Caco-2 (cell line): ENCODE measurements at regions of chr9 and their contacts with region 1.

Region 1: DNA sequence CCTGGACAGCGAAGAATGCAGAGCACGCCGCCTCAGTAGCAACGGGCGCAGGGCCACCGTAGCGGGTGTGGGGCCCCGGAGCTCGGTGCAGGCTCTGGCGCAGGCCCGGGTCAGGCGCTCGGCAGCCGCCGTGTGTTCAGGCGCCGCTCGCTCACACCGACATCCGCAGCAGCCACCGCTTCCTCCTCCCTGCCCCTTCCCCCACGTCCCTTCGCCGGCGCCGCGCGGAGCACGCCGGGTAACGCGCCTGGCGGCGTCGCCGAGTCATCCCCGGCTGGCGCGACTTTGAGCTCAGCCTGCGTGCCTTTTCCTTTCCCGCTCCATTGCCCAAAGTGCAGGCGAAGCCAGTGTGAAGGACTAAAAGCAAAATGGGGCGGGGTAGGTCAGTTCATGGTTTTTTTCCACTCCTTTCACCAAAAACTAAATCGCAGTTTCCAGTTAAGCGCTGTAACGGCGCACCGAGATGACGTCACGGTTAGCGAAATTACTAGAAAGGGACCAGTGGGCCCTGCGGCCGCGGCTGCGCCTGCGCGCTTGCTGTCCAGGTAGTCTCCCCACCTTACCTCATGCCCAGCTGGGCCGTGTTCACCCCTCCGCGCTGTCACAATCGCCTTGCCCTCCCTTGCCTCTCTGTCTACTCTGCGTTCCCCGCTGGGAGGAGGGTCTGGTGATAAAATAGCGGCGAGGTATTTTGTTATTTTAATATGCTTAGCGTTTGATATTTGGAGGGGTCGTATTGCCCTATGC is at the start of gene UBQLN1:
- DNase-seq: peak; percentile 82 to 87
- H3K4me3 ChIP-seq: peak within 1 kb of the TSS; percentile 87
- H3K4me3 Mint-ChIP-seq: peak within 1 kb of the TSS; percentile 90
- H3K27ac Mint-ChIP-seq: peak within 1 kb of the TSS; percentile 99
- H3K4me1 ChIP-seq: 0 out of 2 replicates have a peak, but pooled peaks cover 4% of the 10 kb centered on the region
- H3K4me1 Mint-ChIP-seq: no peaks in the 10 kb centered on the region
- H3K27me3 ChIP-seq: no peaks in the 10 kb centered on the region
- H3K27me3 Mint-ChIP-seq: no peaks in the 10 kb centered on the region
- CTCF ChIP-seq: no peak
- total RNA-seq, gene UBQLN1: 56.0 and 56.3 TPM in 2 replicates

Region 2: GRCh38 chr9:83469722-83470121 is 238.2 kb before region 1 on chr9:
- CTCF ChIA-PET with region 1: no interaction called
- POLR2A ChIA-PET with region 1: no interaction called
- intact Hi-C with region 1: no loop called
- DNase-seq: no peak
- H3K4me3 ChIP-seq: no peak overlapping the region
- H3K4me3 Mint-ChIP-seq: no peak overlapping the region
- H3K27ac Mint-ChIP-seq: no peak overlapping the region
- H3K4me1 ChIP-seq: no peaks in the 10 kb centered on the region
- H3K4me1 Mint-ChIP-seq: peaks cover 12% of the 10 kb centered on the region
- H3K27me3 ChIP-seq: no peaks in the 10 kb centered on the region
- H3K27me3 Mint-ChIP-seq: peaks cover 8% of the 10 kb centered on the region
- CTCF ChIP-seq: no peak

Region 3: GRCh38 chr9:83491995-83492394 is 215.9 kb before region 1 on chr9:
- CTCF ChIA-PET with region 1: no interaction called
- POLR2A ChIA-PET with region 1: no interaction called
- intact Hi-C with region 1: no loop called
- DNase-seq: no peak
- H3K4me3 ChIP-seq: no peak overlapping the region
- H3K4me3 Mint-ChIP-seq: no peak overlapping the region
- H3K27ac Mint-ChIP-seq: no peak overlapping the region
- H3K4me1 ChIP-seq: no peaks in the 10 kb centered on the region
- H3K4me1 Mint-ChIP-seq: no peaks in the 10 kb centered on the region
- H3K27me3 ChIP-seq: no peaks in the 10 kb centered on the region
- H3K27me3 Mint-ChIP-seq: peaks cover 3% of the 10 kb centered on the region
- CTCF ChIP-seq: no peak

Region 4: DNA sequence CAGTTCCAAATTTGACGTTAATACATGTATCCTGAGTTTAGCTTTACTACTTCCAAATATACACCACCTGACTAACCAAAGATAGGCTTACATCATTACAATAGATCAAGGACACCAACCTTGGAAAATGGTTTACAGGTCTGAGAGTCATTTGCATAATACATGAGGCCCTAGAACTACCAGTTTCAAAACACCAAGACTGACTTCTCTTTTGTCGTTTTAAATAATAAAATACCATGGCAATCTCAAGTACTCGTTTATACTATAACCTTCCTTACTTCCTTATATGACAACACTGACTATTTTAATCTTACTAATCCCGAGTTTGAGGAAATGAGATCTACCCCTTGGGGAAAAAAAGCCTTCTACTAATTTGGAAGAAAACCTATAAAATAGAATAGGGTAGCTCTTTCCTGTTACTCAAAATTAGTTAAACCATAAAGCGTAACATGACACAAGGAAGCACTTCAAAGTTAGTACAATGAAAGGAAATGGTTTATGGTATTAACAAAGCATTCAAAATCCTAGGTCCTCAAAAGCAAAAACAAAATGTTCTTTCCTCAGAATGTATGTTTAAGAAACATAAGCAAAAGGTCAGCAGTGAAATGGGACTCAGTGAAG is 42.3 kb before region 1 on chr9:
- CTCF ChIA-PET with region 1: no interaction called
- POLR2A ChIA-PET with region 1: no interaction called
- intact Hi-C with region 1: loop called (anchors 5 kb)
- DNase-seq: no peak
- H3K4me3 ChIP-seq: no peak overlapping the region
- H3K4me3 Mint-ChIP-seq: no peak overlapping the region
- H3K27ac Mint-ChIP-seq: no peak overlapping the region
- H3K4me1 ChIP-seq: no peaks in the 10 kb centered on the region
- H3K4me1 Mint-ChIP-seq: no peaks in the 10 kb centered on the region
- H3K27me3 ChIP-seq: no peaks in the 10 kb centered on the region
- H3K27me3 Mint-ChIP-seq: no peaks in the 10 kb centered on the region
- CTCF ChIP-seq: no peak